Breast epithelium (tissue), 4 donors: ENCODE measurements at regions of chr5 and their contacts with region 1.

Region 1: DNA sequence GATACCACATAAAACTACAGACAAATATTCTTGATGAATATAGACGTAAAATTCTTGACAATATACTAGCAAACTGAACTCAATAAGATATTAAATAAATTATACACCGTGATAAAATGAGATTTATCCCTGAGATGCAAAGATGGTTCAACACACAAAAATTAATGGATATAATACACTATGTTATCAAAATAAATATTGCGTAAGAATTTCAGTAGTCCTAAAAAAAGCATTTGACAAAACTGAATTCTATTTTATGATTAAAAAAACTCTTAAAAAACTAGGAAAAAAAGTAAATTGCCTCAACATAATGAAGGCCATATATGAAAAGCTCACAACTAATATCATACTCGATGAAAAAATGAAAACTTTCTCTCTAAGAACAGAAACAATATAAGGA is 472.3 kb upstream of the GRIA1 start:
- DNase-seq: no peak
- H3K4me3 ChIP-seq: no peak overlapping the region
- H3K27ac ChIP-seq: no peak overlapping the region
- H3K4me1 ChIP-seq: no peaks in the 10 kb centered on the region
- H3K27me3 ChIP-seq: no peaks in the 10 kb centered on the region
- CTCF ChIP-seq: no peak
- POLR2A ChIP-seq: no peak

Region 2: DNA sequence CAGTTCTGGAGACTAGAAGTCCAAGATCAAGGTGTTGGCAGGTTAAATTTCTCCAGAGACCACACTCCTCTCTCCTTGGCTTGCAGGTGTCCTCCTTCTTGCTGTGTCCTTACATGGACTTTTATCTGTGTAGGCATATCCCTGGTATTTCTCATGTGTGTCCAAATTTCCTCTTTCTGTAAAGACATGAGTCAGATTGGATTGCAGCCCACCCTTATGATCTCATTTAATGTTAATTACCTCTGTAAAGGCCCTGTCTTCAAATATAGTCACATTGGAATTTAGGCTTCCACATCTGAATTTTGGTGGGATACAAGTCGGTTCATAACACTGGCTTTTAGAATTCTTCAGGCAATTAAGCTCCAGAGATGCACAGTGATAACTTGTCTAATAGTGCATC is 150.1 kb after region 1 on chr5:
- intact Hi-C with region 1: no loop called
- DNase-seq: no peak
- H3K4me3 ChIP-seq: no peak overlapping the region
- H3K27ac ChIP-seq: no peak overlapping the region
- H3K4me1 ChIP-seq: no peaks in the 10 kb centered on the region
- H3K27me3 ChIP-seq: no peaks in the 10 kb centered on the region
- CTCF ChIP-seq: no peak
- POLR2A ChIP-seq: no peak

Region 3: GRCh38 chr5:153445851-153446579 is 427.9 kb after region 1 on chr5:
- intact Hi-C with region 1: loop called (anchors 5 kb)
- DNase-seq: peak; percentile 29 to 53
- H3K4me3 ChIP-seq: peak overlapping the region in 1 of 3 donors; percentile 18
- H3K27ac ChIP-seq: peak overlapping the region in 1 of 2 donors; percentile 38
- H3K4me1 ChIP-seq: no peaks in the 10 kb centered on the region
- H3K27me3 ChIP-seq: no peaks in the 10 kb centered on the region
- CTCF ChIP-seq: no peak
- POLR2A ChIP-seq: no peak